ENCODE measurements at regions of chr21 and their contacts with region 1.

Region 1: GRCh38 chr21:34865928-34866284 is 183.2 kb downstream of the RUNX1 start:
- DNase-seq: peak; percentile 71
- H3K4me3 Mint-ChIP-seq: peak overlapping the region; percentile 48
- H3K27ac Mint-ChIP-seq: peak overlapping the region; percentile 94
- H3K4me1 Mint-ChIP-seq: peaks cover 74% of the 10 kb centered on the region
- H3K27me3 Mint-ChIP-seq: no peaks in the 10 kb centered on the region
- CTCF ChIP-seq: no peak

Region 2: GRCh38 chr21:34795175-34795547 is 70.7 kb before region 1 on chr21:
- CTCF ChIA-PET with region 1: interaction called, 3 read pairs
- POLR2A ChIA-PET with region 1: interaction called, 30 read pairs
- intact Hi-C with region 1: loop called (anchors 1 kb)
- DNase-seq: peak; percentile 43
- H3K4me3 Mint-ChIP-seq: peak overlapping the region; percentile 49
- H3K27ac Mint-ChIP-seq: peak overlapping the region; percentile 96
- H3K4me1 Mint-ChIP-seq: peaks cover 44% of the 10 kb centered on the region
- H3K27me3 Mint-ChIP-seq: no peaks in the 10 kb centered on the region
- CTCF ChIP-seq: no peak

Region 3: GRCh38 chr21:34801519-34802132 is 64.3 kb before region 1 on chr21:
- CTCF ChIA-PET with region 1: no interaction called
- POLR2A ChIA-PET with region 1: interaction called, 47 read pairs
- intact Hi-C with region 1: no loop called
- DNase-seq: peak; percentile 52
- H3K4me3 Mint-ChIP-seq: no peak overlapping the region
- H3K27ac Mint-ChIP-seq: peak overlapping the region; percentile 88
- H3K4me1 Mint-ChIP-seq: peaks cover 45% of the 10 kb centered on the region
- H3K27me3 Mint-ChIP-seq: no peaks in the 10 kb centered on the region
- CTCF ChIP-seq: peak; percentile 24

Region 4: GRCh38 chr21:34807146-34807880 is 58.6 kb before region 1 on chr21:
- CTCF ChIA-PET with region 1: interaction called, 3 read pairs
- POLR2A ChIA-PET with region 1: interaction called, 86 read pairs
- intact Hi-C with region 1: no loop called
- DNase-seq: peak; percentile 98
- H3K4me3 Mint-ChIP-seq: peak overlapping the region; percentile 47
- H3K27ac Mint-ChIP-seq: peak overlapping the region; percentile 99
- H3K4me1 Mint-ChIP-seq: peaks cover 40% of the 10 kb centered on the region
- H3K27me3 Mint-ChIP-seq: no peaks in the 10 kb centered on the region
- CTCF ChIP-seq: no peak

Region 5: GRCh38 chr21:34812504-34813265 is 53.2 kb before region 1 on chr21:
- CTCF ChIA-PET with region 1: interaction called, 3 read pairs
- POLR2A ChIA-PET with region 1: interaction called, 86 read pairs
- intact Hi-C with region 1: no loop called
- DNase-seq: peak; percentile 57
- H3K4me3 Mint-ChIP-seq: peak overlapping the region; percentile 9
- H3K27ac Mint-ChIP-seq: no peak overlapping the region
- H3K4me1 Mint-ChIP-seq: peaks cover 61% of the 10 kb centered on the region
- H3K27me3 Mint-ChIP-seq: no peaks in the 10 kb centered on the region
- CTCF ChIP-seq: no peak

Region 6: GRCh38 chr21:34836103-34836932 is 29.6 kb before region 1 on chr21:
- CTCF ChIA-PET with region 1: interaction called, 3 read pairs
- POLR2A ChIA-PET with region 1: interaction called, 41 read pairs
- intact Hi-C with region 1: no loop called
- DNase-seq: peak; percentile 98
- H3K4me3 Mint-ChIP-seq: peak overlapping the region; percentile 64
- H3K27ac Mint-ChIP-seq: peak overlapping the region; percentile 94
- H3K4me1 Mint-ChIP-seq: peaks cover 31% of the 10 kb centered on the region
- H3K27me3 Mint-ChIP-seq: no peaks in the 10 kb centered on the region
- CTCF ChIP-seq: no peak

Region 7: GRCh38 chr21:34881894-34882371 is 16.0 kb after region 1 on chr21:
- CTCF ChIA-PET with region 1: interaction called, 6 read pairs
- POLR2A ChIA-PET with region 1: interaction called, 414 read pairs
- intact Hi-C with region 1: loop called (anchors 1 kb)
- DNase-seq: peak; percentile 71
- H3K4me3 Mint-ChIP-seq: peak overlapping the region; percentile 99
- H3K27ac Mint-ChIP-seq: peak overlapping the region; percentile 91
- H3K4me1 Mint-ChIP-seq: peaks cover 48% of the 10 kb centered on the region
- H3K27me3 Mint-ChIP-seq: no peaks in the 10 kb centered on the region
- CTCF ChIP-seq: no peak